ENCODE measurements at regions of chr19 and their contacts with region 1.

Region 1: GRCh38 chr19:48705431-48705830 is 9.7 kb downstream of the FUT2 start:
- DNase-seq: no peak
- H3K4me3 ChIP-seq: no peak overlapping the region
- H3K27ac ChIP-seq: no peak overlapping the region
- H3K4me1 ChIP-seq: no peaks in the 10 kb centered on the region
- H3K27me3 ChIP-seq: no peaks in the 10 kb centered on the region
- CTCF ChIP-seq: no peak
- POLR2A ChIP-seq: no peak

Region 2: GRCh38 chr19:48543121-48544056 is 162.0 kb before region 1 on chr19:
- intact Hi-C with region 1: no loop called
- DNase-seq: peak; percentile 78 to 86
- H3K4me3 ChIP-seq: no peak overlapping the region
- H3K27ac ChIP-seq: no peak overlapping the region
- H3K4me1 ChIP-seq: peaks cover 13 to 20% of the 10 kb centered on the region in 2 donors
- H3K27me3 ChIP-seq: no peaks in the 10 kb centered on the region
- CTCF ChIP-seq: no peak
- POLR2A ChIP-seq: no peak

Region 3: DNA sequence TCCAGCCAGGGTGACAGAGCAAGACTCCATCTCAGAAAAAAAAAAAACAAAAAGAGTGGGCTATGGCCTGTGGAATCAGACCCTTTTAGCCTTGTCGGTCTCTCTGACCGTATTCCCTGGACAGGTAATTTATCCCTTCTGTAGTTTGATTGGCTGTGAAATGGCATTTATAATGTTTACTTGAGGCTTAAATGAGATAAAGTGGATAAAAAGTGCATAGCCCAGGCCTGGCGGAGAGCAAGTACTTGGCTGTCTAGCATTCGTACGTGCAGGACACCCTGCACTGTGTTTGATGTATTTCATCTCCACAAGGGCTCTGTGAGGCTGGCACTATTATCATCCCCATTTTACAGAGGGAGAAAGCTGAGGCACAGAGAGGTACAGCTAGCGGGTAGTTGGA is 39.6 kb before region 1 on chr19:
- intact Hi-C with region 1: loop called (anchors 2 kb)
- DNase-seq: no peak
- H3K4me3 ChIP-seq: no peak overlapping the region
- H3K27ac ChIP-seq: no peak overlapping the region
- H3K4me1 ChIP-seq: peaks cover 0 to 3% of the 10 kb centered on the region in 2 donors
- H3K27me3 ChIP-seq: no peaks in the 10 kb centered on the region
- CTCF ChIP-seq: no peak
- POLR2A ChIP-seq: no peak

Measured in thyroid gland (tissue), 4 donors.